Heart right ventricle (tissue), 16 donors: ENCODE measurements at regions of chr2 and their contacts with region 1.

Region 1: GRCh38 chr2:152335010-152335725 is at the start of gene FMNL2:
- DNase-seq: peak; percentile 82 to 86
- ATAC-seq: peak; percentile 91 to 96 (median 93)
- H3K4me3 ChIP-seq: peak within 1 kb of the TSS; percentile 70 to 99 (median 96)
- H3K27ac ChIP-seq: peak within 1 kb of the TSS; percentile 62 to 88 (median 77)
- H3K4me1 ChIP-seq: peaks cover 0 to 41% (median 16%) of the 10 kb centered on the region in 9 donors
- H3K27me3 ChIP-seq: peaks cover 0 to 25% (median 0%) of the 10 kb centered on the region in 7 donors
- CTCF ChIP-seq: peak in 3 of 9 donors; percentile 32 to 39 (median 37)
- total RNA-seq, gene FMNL2: 3.3 to 10.4 (median 4.4) TPM

Region 2: DNA sequence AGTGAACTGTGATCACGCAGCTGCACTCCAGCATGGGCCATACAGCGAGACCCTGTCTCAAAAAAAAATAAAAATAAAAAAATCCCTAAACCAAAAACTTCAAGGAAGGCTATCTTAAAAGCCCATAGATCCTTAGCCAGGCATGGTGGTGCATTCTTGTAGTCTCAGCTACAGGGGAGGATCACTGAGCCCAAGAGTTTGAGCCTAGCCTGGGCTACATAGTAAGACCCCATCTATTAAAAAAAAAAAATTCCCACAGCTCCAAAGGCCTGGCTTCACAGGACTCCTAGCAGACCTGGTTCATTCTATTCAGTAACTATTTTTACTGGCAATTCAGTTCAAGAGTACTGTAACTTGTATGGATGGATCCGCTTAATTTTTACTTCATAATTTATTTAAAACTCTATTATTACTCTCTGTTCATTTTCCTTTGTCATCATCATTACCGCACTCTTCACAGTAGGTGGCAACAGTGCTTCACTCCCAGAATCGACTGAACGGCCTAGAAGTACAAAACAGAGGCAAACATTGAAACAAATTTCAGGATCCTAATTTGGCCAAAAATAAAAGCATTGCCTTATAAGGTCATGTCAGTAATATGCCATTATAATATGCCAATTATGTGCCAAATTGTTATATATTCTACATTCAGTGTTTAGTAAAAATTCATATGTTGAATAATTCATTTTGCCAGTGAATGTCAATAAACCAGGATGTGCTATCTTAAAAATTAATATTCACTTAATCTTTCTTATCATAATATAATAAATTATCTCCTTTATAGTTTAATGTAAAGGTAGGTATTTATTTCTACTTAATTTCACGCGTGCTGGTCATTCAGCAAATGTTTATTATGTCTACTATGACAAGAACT is 145.3 kb before region 1 on chr2:
- intact Hi-C with region 1: loop called in 5 of 10 experiments (anchors 5 to 10 kb)
- DNase-seq: peak in 1 of 2 donors; percentile 36
- ATAC-seq: peak in 7 of 8 donors; percentile 61 to 88 (median 82)
- H3K4me3 ChIP-seq: no peak overlapping the region
- H3K27ac ChIP-seq: no peak overlapping the region
- H3K4me1 ChIP-seq: no peaks in the 10 kb centered on the region
- H3K27me3 ChIP-seq: peaks cover 0 to 11% (median 0%) of the 10 kb centered on the region in 7 donors
- CTCF ChIP-seq: peak; percentile 56 to 92 (median 84)

Region 3: GRCh38 chr2:152407204-152407721 is 72.1 kb after region 1 on chr2:
- intact Hi-C with region 1: loop called in 3 of 10 experiments (anchors 5 to 10 kb)
- DNase-seq: peak; percentile 26 to 40
- ATAC-seq: peak; percentile 49 to 74 (median 63)
- H3K4me3 ChIP-seq: peak overlapping the region in 7 of 10 donors; percentile 10 to 40 (median 34)
- H3K27ac ChIP-seq: peak overlapping the region in 6 of 10 donors; percentile 12 to 77 (median 48)
- H3K4me1 ChIP-seq: peaks cover 6 to 81% (median 55%) of the 10 kb centered on the region in 9 donors
- H3K27me3 ChIP-seq: no peaks in the 10 kb centered on the region
- CTCF ChIP-seq: peak in 1 of 9 donors; percentile 19

Region 4: GRCh38 chr2:152497481-152498052 is 162.4 kb after region 1 on chr2:
- intact Hi-C with region 1: loop called in 1 of 10 experiments (anchors 10 kb)
- DNase-seq: peak in 1 of 2 donors; percentile 13
- ATAC-seq: peak in 2 of 8 donors; percentile 31 to 35
- H3K4me3 ChIP-seq: no peak overlapping the region
- H3K27ac ChIP-seq: peak overlapping the region in 1 of 10 donors; percentile 89
- H3K4me1 ChIP-seq: peaks cover 0 to 64% (median 32%) of the 10 kb centered on the region in 9 donors
- H3K27me3 ChIP-seq: no peaks in the 10 kb centered on the region
- CTCF ChIP-seq: no peak

Region 5: DNA sequence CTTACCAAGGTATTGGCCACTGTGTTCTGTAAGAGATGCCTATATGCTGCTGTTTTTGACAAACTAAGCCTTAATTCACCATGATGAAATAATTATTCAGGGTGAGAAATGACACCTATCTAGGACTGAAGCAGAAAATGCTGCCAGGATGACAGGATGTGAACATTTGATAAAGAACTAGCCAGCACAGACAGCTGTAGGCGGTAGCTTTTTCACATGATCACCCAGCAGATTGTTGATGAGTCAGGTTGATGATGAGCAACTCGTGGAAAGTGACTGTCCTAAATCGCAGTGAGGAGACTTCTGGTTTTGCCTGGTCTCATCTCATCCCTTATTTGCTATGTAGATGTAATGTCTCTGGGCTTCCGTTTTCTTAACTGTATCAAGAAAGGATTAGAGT is 238.0 kb after region 1 on chr2:
- intact Hi-C with region 1: loop called in 1 of 10 experiments (anchors 10 kb)
- DNase-seq: no peak
- ATAC-seq: peak in 4 of 8 donors; percentile 31 to 56 (median 48)
- H3K4me3 ChIP-seq: no peak overlapping the region
- H3K27ac ChIP-seq: no peak overlapping the region
- H3K4me1 ChIP-seq: peaks cover 0 to 45% (median 11%) of the 10 kb centered on the region in 9 donors
- H3K27me3 ChIP-seq: no peaks in the 10 kb centered on the region
- CTCF ChIP-seq: no peak

Region 6: DNA sequence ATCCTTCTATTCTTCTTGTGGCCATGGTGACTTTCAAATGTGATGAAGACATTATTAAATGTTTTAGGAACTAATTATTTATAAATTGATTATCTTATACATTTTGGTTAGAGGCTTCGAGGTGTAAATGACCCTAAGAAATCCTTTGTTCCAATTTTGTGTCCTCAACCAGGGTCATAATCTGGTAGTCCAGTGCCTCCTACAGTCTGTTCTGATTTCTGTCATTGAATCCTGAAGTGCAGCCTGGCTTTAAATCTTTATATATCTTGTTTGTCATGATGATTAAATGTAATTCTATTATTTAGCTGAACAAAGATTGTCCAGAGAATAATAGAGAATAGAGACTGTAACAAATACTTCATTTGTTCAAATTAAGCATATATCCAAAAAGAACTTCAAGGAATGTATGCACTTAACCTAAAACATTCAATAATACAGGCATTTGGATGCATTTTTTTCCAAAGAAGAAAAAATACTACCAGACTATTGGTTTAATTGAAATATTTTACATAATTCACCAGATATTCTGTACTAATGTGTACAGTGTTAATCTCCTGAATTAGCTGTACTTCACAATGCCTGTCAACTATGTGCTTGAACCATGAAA is 292.3 kb after region 1 on chr2:
- intact Hi-C with region 1: loop called in 8 of 10 experiments (anchors 5 to 10 kb)
- DNase-seq: no peak
- ATAC-seq: peak in 7 of 8 donors; percentile 52 to 75 (median 67)
- H3K4me3 ChIP-seq: no peak overlapping the region
- H3K27ac ChIP-seq: no peak overlapping the region
- H3K4me1 ChIP-seq: peaks cover 0 to 4% (median 0%) of the 10 kb centered on the region in 9 donors
- H3K27me3 ChIP-seq: no peaks in the 10 kb centered on the region
- CTCF ChIP-seq: peak; percentile 18 to 78 (median 64)

Region 7: GRCh38 chr2:152815634-152816257 is 480.6 kb after region 1 on chr2:
- intact Hi-C with region 1: no loop called
- DNase-seq: no peak
- ATAC-seq: no peak
- H3K4me3 ChIP-seq: no peak overlapping the region
- H3K27ac ChIP-seq: no peak overlapping the region
- H3K4me1 ChIP-seq: no peaks in the 10 kb centered on the region
- H3K27me3 ChIP-seq: peaks cover 0 to 6% (median 0%) of the 10 kb centered on the region in 7 donors
- CTCF ChIP-seq: no peak